ENCODE measurements at regions of chr2 and their contacts with region 1.

Region 1: DNA sequence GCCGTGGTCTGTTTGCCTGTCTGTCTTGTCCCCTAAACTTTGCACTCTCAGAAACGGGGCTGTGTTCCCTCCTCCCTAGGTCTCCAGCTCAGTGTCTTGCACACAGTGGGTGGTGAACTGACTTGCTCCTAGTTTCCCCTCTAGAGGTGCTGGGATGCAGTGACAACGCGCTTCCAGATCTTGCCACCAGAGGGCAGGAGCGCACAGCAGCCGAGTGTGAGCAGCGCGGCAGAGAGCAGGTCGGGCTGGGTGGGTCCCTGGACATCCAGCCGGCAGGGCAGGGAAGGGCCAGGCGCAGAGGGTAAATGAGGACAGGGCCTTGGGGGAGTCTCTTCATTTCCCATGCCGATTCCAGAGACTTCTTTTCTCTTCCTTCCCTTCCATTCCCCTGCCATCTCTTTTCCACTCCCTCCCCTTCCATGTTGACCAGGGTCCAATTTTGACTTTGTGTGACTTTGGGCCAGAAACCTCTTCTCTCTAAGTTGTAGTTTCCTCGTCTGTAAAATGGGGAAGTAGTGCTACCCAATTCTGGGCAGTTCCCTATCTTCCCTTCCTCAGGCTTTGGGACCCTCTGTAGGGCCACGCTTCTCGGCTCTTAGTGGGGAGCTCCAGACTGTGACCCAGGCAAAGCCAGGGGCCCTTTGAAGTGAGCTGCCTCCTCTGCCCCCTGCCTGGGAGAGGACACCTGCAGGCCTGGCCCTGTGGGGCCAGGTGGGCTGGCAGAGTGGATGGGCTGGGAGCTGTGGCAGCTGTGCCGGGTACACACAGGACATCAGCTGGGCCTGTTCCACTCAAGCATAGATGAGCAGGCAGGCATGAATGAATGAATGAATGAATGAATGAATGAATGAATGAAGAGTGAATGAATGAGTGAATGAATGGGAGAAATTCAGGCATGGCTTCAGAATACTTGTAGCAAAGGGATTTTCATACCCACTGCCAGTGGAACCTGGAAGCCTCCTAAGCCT is 43.3 kb upstream of the TAF1B start:
- DNase-seq: peak; percentile 82
- H3K4me3 ChIP-seq: no peak overlapping the region
- H3K27ac ChIP-seq: no peak overlapping the region
- H3K4me1 ChIP-seq: no peaks in the 10 kb centered on the region
- H3K27me3 ChIP-seq: no peaks in the 10 kb centered on the region
- CTCF ChIP-seq: peak; percentile 96 to 99
- POLR2A ChIP-seq: no peak

Region 2: GRCh38 chr2:9430316-9431293 is 369.3 kb before region 1 on chr2:
- CTCF ChIA-PET with region 1: no interaction called
- POLR2A ChIA-PET with region 1: no interaction called
- dilution Hi-C with region 1: no loop called
- intact Hi-C with region 1: no loop called
- DNase-seq: peak; percentile 32
- H3K4me3 ChIP-seq: no peak overlapping the region
- H3K27ac ChIP-seq: peak overlapping the region; percentile 2
- H3K4me1 ChIP-seq: peaks cover 7% of the 10 kb centered on the region
- H3K27me3 ChIP-seq: no peaks in the 10 kb centered on the region
- CTCF ChIP-seq: no peak
- POLR2A ChIP-seq: no peak

Region 3: DNA sequence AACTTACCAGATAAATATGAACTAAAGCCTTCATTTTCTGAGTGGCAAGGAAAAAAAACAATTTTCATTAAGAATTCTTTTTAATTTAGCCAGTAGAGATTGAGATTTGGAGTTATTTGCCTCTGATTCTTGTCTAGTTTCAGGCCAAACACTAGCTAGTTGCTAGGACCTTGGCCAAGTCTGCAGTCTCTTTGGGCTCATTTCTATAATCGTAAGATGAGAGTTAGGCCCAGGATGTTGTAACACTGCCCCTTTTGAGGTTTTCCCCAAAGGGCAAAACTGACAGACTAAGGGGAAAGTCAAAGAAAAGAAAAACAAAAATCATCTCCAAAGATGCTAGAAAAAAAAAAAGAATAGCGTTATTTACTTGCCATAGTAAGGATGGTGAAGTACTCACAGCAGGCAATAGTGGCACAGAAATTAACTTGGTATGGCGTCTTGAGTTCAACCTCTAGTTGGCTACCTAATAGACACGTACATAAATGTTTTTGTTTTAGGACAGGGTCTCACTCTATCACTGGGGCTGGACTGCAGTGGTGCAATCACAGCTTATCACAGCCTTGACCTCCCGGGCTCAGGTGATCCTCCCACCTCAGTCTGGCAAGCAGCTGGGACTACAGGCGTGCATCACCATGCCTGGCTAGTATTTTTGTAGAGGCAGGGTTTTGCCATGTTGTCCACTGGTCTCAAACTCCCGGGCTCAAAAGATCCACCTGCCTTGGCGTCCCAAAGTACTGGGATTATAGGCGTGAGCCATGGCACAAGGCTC is 221.3 kb before region 1 on chr2:
- CTCF ChIA-PET with region 1: no interaction called
- POLR2A ChIA-PET with region 1: no interaction called
- dilution Hi-C with region 1: no loop called
- intact Hi-C with region 1: no loop called
- DNase-seq: no peak
- H3K4me3 ChIP-seq: no peak overlapping the region
- H3K27ac ChIP-seq: no peak overlapping the region
- H3K4me1 ChIP-seq: peaks cover 9% of the 10 kb centered on the region
- H3K27me3 ChIP-seq: no peaks in the 10 kb centered on the region
- CTCF ChIP-seq: no peak
- POLR2A ChIP-seq: no peak

Region 4: GRCh38 chr2:9914384-9915065 is 114.6 kb after region 1 on chr2:
- CTCF ChIA-PET with region 1: interaction called, 10 read pairs
- POLR2A ChIA-PET with region 1: no interaction called
- dilution Hi-C with region 1: no loop called
- intact Hi-C with region 1: no loop called
- DNase-seq: peak; percentile 37
- H3K4me3 ChIP-seq: no peak overlapping the region
- H3K27ac ChIP-seq: peak overlapping the region; percentile 6
- H3K4me1 ChIP-seq: peaks cover 6% of the 10 kb centered on the region
- H3K27me3 ChIP-seq: no peaks in the 10 kb centered on the region
- CTCF ChIP-seq: no peak
- POLR2A ChIP-seq: no peak

Region 5: DNA sequence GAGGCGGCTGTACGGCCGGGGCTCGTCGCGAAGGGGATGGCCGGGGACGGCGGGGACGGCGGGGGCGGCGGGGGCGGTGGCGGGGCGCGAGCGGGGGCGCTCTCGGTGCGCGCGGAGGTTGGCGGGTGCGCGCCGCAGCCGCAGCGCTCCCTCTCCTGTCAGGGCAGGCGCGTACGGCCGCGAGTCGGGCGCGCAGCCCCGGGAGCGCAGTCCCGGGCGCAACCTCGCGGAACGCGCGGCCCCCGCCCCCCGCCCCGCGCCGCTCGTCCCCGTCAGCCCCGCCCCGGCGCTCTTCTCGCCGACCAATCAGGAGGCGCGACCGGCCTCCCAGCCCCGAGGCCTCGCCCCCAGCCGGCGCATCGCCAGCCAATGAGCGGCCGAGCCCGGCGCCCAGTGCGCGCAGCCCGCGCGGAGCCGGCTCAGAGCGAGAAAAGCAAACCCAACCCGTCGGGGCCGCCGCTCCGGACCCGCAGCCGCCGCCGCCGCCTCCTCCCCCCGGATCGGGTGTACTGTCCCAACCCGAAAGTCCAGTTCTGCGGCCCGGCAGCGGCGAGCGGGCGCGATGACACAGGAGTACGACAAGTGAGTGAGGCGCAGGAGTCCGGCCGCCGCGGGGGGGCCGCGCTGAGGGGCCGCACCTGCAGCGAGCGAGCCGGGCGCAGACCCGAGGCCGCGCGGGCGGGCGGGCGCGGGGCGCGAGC is 151.5 kb after region 1 on chr2 and contains the start of gene GRHL1:
- CTCF ChIA-PET with region 1: no interaction called
- POLR2A ChIA-PET with region 1: no interaction called
- dilution Hi-C with region 1: loop called (anchors 25 kb)
- intact Hi-C with region 1: no loop called
- DNase-seq: peak; percentile 92
- H3K4me3 ChIP-seq: peak within 1 kb of the TSS; percentile 58 to 67 (median 59)
- H3K27ac ChIP-seq: no peak within 1 kb of the TSS
- H3K4me1 ChIP-seq: peaks cover 4% of the 10 kb centered on the region
- H3K27me3 ChIP-seq: no peaks in the 10 kb centered on the region
- CTCF ChIP-seq: no peak
- POLR2A ChIP-seq: no peak
- total RNA-seq, gene GRHL1: 0.85 and 1.1 TPM in 2 replicates

Region 6: DNA sequence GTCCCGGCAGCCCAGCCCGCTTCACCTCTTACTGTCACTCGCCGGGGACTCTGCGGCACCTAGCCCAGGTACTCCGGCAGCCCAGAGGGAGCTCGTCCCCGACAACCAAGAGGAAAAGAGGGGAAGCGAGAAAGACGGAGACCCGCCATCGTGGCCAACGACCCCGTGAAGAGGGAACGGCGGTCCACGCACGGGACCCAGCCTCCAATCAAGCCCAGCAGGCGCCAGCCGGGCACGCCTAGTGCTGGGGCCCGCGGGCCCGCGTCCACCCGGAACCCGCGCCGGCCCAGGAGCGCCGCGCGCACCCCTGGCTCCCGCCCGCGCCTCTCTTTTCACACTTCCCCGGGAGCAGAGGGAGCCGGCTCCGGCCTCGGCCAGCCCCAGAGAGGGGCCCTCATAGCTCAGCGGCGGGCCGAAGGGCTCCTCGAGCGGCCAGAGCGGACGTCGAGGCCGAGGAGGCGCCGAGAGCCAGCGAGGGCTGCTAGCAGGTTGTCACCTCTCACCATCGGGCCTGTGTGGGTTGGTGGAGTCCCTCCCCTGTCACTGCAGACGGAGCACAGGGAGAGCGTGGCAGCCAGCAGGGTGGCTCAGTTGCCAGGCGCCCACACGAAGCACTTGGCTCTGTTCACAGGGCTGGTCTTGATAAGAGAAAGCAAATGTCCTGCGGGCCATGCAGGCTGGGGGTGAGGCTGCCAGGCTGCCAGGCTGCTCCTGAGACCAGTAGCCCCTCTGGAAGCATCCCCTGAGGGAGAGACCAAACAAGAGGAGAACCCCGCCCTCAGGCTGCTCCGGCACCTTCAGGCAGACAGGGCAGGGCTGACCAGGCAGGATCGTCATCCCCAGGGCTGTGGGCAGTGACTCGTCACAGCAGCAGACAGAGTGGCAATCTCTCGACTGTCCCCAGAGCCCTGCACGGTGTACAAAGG is 206.6 kb after region 1 on chr2:
- CTCF ChIA-PET with region 1: no interaction called
- POLR2A ChIA-PET with region 1: no interaction called
- dilution Hi-C with region 1: no loop called
- intact Hi-C with region 1: no loop called
- DNase-seq: no peak
- H3K4me3 ChIP-seq: no peak overlapping the region
- H3K27ac ChIP-seq: no peak overlapping the region
- H3K4me1 ChIP-seq: no peaks in the 10 kb centered on the region
- H3K27me3 ChIP-seq: no peaks in the 10 kb centered on the region
- CTCF ChIP-seq: no peak
- POLR2A ChIP-seq: no peak

Region 7: GRCh38 chr2:10028988-10029874 is 229.3 kb after region 1 on chr2:
- CTCF ChIA-PET with region 1: interaction called, 13 read pairs
- POLR2A ChIA-PET with region 1: no interaction called
- dilution Hi-C with region 1: no loop called
- intact Hi-C with region 1: no loop called
- DNase-seq: peak; percentile 19
- H3K4me3 ChIP-seq: no peak overlapping the region
- H3K27ac ChIP-seq: no peak overlapping the region
- H3K4me1 ChIP-seq: peaks cover 7% of the 10 kb centered on the region
- H3K27me3 ChIP-seq: no peaks in the 10 kb centered on the region
- CTCF ChIP-seq: no peak
- POLR2A ChIP-seq: no peak

Region 8: DNA sequence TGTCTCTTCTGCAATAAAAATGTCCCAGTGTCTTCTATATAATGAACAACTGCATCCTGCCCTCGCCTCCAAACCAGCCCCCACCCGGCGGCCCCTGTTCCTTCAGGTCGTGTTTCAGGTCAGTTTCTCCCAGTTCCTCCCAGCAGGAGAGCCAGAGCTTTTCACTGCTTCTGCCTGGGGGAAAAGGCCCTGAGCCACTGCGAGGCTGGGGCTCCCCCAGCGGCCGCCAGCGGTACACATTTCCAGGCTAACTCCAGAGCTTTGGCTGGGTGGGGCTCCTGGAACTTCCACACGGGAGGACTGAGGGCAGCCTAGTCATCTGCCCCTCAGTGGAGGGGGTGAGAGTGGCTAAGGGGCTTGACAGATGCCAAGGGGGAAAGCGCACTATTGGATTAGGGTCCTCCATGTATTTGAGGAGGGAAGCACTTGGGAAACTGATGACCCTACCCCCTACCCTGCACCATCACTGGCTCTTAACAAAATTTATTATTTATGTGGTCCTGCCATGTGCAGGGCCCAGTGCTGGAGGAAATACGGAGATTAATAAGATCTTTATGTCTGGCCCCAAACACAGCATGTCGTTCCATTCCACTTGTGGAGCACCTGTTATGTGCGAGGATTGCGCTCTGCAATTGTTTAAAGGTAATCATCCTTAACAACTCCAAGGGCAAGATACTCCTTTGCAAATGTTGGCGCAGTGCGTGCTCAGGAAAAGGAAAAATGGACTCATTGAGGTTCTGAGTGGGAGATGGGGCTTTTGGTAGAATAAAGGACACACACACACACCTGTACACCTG is 297.6 kb after region 1 on chr2:
- CTCF ChIA-PET with region 1: interaction called, 24 read pairs
- POLR2A ChIA-PET with region 1: no interaction called
- dilution Hi-C with region 1: no loop called
- intact Hi-C with region 1: no loop called
- DNase-seq: peak; percentile 54
- H3K4me3 ChIP-seq: no peak overlapping the region
- H3K27ac ChIP-seq: no peak overlapping the region
- H3K4me1 ChIP-seq: no peaks in the 10 kb centered on the region
- H3K27me3 ChIP-seq: peaks cover 0 to 1% of the 10 kb centered on the region in 2 experiments
- CTCF ChIP-seq: peak; percentile 87 to 95
- POLR2A ChIP-seq: no peak